CD8-positive, alpha-beta T cell (primary cell): ENCODE measurements at regions of chr4 and their contacts with region 1.

Region 1: GRCh38 chr4:40275065-40275730 is 59.9 kb upstream of the CHRNA9 start:
- DNase-seq: peak in 1 of 9 experiments; percentile 39
- ATAC-seq: peak; percentile 44
- H3K4me3 ChIP-seq: no peak overlapping the region
- H3K4me3 Mint-ChIP-seq: peak overlapping the region; percentile 37
- H3K27ac ChIP-seq: peak overlapping the region in 1 of 2 experiments; percentile 27
- H3K27ac Mint-ChIP-seq: peak overlapping the region; percentile 87
- H3K4me1 ChIP-seq: peaks cover 31% of the 10 kb centered on the region
- H3K4me1 Mint-ChIP-seq: peaks cover 46% of the 10 kb centered on the region
- H3K27me3 ChIP-seq: no peaks in the 10 kb centered on the region
- H3K27me3 Mint-ChIP-seq: no peaks in the 10 kb centered on the region
- CTCF ChIP-seq: no peak

Region 2: GRCh38 chr4:39655211-39655610 is 620.0 kb before region 1 on chr4:
- CTCF ChIA-PET with region 1: no interaction called
- POLR2A ChIA-PET with region 1: no interaction called
- intact Hi-C with region 1: no loop called
- DNase-seq: no peak
- ATAC-seq: no peak
- H3K4me3 ChIP-seq: no peak overlapping the region
- H3K4me3 Mint-ChIP-seq: no peak overlapping the region
- H3K27ac ChIP-seq: no peak overlapping the region
- H3K27ac Mint-ChIP-seq: no peak overlapping the region
- H3K4me1 ChIP-seq: no peaks in the 10 kb centered on the region
- H3K4me1 Mint-ChIP-seq: no peaks in the 10 kb centered on the region
- H3K27me3 ChIP-seq: no peaks in the 10 kb centered on the region
- H3K27me3 Mint-ChIP-seq: no peaks in the 10 kb centered on the region
- CTCF ChIP-seq: no peak

Region 3: DNA sequence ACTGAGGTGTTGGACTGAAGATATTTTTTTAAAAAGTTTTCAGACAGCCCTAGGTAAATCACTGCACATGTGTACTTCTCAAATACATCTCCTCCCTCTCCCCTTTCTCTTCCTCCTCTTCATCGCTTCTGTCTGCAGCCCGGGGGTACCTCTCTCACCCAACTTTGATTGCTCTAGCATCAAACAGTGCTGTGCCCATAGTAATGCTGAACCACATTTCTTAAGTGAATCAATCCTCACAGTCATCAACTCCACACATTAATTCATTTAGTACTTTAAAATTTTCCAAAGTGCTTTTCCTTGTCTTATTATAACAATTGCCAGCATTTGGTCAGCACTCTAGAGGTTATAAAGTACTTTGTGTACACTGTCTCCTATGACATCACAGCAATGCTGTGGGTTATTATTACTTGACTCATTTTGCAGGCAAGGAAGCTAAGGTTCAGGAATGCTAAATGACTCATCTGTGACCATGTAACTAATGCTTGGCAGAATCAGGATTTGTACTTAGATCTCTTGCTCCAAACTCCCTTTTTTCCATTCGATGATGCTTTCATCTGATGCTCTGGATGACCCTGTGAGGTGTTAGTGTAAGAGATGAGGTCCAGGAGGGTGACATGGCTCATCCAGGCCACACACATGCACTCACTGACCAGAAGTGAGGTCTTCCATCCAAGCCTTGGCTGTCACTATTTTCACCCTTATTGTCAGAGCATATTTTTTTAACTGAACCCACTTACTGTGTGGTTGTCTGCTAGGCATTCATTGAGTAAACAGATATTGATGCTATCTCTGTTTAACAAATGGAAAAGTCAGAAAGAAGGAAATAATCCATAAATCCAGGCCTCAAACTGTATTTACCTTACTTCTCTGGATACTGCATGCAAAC is 19.6 kb before region 1 on chr4:
- CTCF ChIA-PET with region 1: interaction called, 4 read pairs
- POLR2A ChIA-PET with region 1: interaction called, 4 read pairs
- intact Hi-C with region 1: loop called (anchors 2 kb)
- DNase-seq: peak in 1 of 9 experiments; percentile 56
- ATAC-seq: peak; percentile 37
- H3K4me3 ChIP-seq: no peak overlapping the region
- H3K4me3 Mint-ChIP-seq: peak overlapping the region; percentile 43
- H3K27ac ChIP-seq: peak overlapping the region in 1 of 2 experiments; percentile 28
- H3K27ac Mint-ChIP-seq: peak overlapping the region; percentile 93
- H3K4me1 ChIP-seq: peaks cover 65% of the 10 kb centered on the region
- H3K4me1 Mint-ChIP-seq: peaks cover 73% of the 10 kb centered on the region
- H3K27me3 ChIP-seq: no peaks in the 10 kb centered on the region
- H3K27me3 Mint-ChIP-seq: no peaks in the 10 kb centered on the region
- CTCF ChIP-seq: no peak

Region 4: GRCh38 chr4:40289366-40290188 is 14.4 kb after region 1 on chr4:
- CTCF ChIA-PET with region 1: interaction called, 11 read pairs
- POLR2A ChIA-PET with region 1: interaction called, 5 read pairs
- intact Hi-C with region 1: no loop called
- DNase-seq: peak in 4 of 9 experiments; percentile 38 to 71 (median 48)
- ATAC-seq: peak; percentile 89
- H3K4me3 ChIP-seq: no peak overlapping the region
- H3K4me3 Mint-ChIP-seq: peak overlapping the region; percentile 61
- H3K27ac ChIP-seq: peak overlapping the region; percentile 19 to 59
- H3K27ac Mint-ChIP-seq: peak overlapping the region; percentile 97
- H3K4me1 ChIP-seq: peaks cover 45% of the 10 kb centered on the region
- H3K4me1 Mint-ChIP-seq: peaks cover 63% of the 10 kb centered on the region
- H3K27me3 ChIP-seq: no peaks in the 10 kb centered on the region
- H3K27me3 Mint-ChIP-seq: no peaks in the 10 kb centered on the region
- CTCF ChIP-seq: no peak

Region 5: GRCh38 chr4:40340030-40340429 is 64.8 kb after region 1 on chr4:
- CTCF ChIA-PET with region 1: no interaction called
- POLR2A ChIA-PET with region 1: no interaction called
- intact Hi-C with region 1: no loop called
- DNase-seq: no peak
- ATAC-seq: no peak
- H3K4me3 ChIP-seq: no peak overlapping the region
- H3K4me3 Mint-ChIP-seq: no peak overlapping the region
- H3K27ac ChIP-seq: no peak overlapping the region
- H3K27ac Mint-ChIP-seq: no peak overlapping the region
- H3K4me1 ChIP-seq: no peaks in the 10 kb centered on the region
- H3K4me1 Mint-ChIP-seq: peaks cover 4% of the 10 kb centered on the region
- H3K27me3 ChIP-seq: no peaks in the 10 kb centered on the region
- H3K27me3 Mint-ChIP-seq: no peaks in the 10 kb centered on the region
- CTCF ChIP-seq: no peak